ENCODE measurements at regions of chr5 and their contacts with region 1.

Region 1: GRCh38 chr5:56099346-56099745 is 104.6 kb upstream of the IL6ST start:
- DNase-seq: no peak
- ATAC-seq: no peak
- H3K4me3 Mint-ChIP-seq: peak overlapping the region in 7 of 10 donors; percentile 30 to 54 (median 40)
- H3K27ac Mint-ChIP-seq: peak overlapping the region; percentile 67 to 96 (median 90)
- H3K4me1 Mint-ChIP-seq: peaks cover 42 to 86% (median 76%) of the 10 kb centered on the region in 4 donors
- H3K27me3 Mint-ChIP-seq: no peaks in the 10 kb centered on the region

Region 2: GRCh38 chr5:56037531-56038010 is 61.8 kb before region 1 on chr5:
- POLR2A ChIA-PET with region 1: no interaction called
- DNase-seq: no peak
- ATAC-seq: peak in 1 of 2 donors; percentile 27
- H3K4me3 Mint-ChIP-seq: peak overlapping the region in 5 of 10 donors; percentile 10 to 63 (median 46)
- H3K27ac Mint-ChIP-seq: peak overlapping the region in 5 of 10 donors; percentile 18 to 73 (median 61)
- H3K4me1 Mint-ChIP-seq: peaks cover 8 to 24% (median 16%) of the 10 kb centered on the region in 4 donors
- H3K27me3 Mint-ChIP-seq: no peaks in the 10 kb centered on the region

Region 3: DNA sequence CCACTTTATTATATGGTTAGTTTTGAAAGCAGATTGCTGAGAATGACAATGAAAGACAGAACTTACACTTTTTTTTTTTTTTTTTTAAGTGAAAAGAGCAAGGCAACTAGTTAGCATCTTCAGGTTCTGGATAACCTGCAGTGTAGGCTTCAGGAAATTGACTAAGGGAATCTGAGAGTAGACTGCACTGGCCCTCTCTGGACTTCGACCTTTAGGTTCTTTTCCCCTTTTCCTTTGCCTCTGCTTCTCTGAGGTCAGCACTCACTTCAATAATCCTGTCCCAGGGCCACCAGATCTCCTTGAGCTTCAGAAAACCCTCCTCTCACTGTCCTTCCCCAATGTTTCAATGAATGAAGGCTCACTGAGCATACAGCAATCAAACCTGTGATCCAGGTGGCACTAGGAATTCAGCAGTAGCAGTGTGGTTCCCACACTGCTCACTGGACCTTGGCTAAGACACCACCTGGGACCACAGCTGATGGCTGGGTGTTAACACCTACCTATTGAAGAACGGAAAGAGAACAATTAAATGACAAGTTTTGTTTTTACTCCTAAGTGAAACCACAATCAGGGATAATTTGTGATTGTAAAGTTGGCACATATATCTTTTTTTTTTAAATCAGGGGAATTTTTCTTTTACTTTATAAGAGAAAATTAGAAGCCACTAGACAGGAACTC is 18.8 kb before region 1 on chr5:
- POLR2A ChIA-PET with region 1: interaction called, 13 read pairs
- DNase-seq: no peak
- ATAC-seq: peak; percentile 54 to 61
- H3K4me3 Mint-ChIP-seq: peak overlapping the region in 9 of 10 donors; percentile 9 to 81 (median 66)
- H3K27ac Mint-ChIP-seq: peak overlapping the region; percentile 68 to 90 (median 84)
- H3K4me1 Mint-ChIP-seq: peaks cover 35 to 58% (median 50%) of the 10 kb centered on the region in 4 donors
- H3K27me3 Mint-ChIP-seq: no peaks in the 10 kb centered on the region

Region 4: GRCh38 chr5:56148453-56148971 is 49.2 kb after region 1 on chr5:
- POLR2A ChIA-PET with region 1: interaction called, 10 read pairs
- DNase-seq: peak in 7 of 10 donors; percentile 26 to 71 (median 49)
- ATAC-seq: peak; percentile 86
- H3K4me3 Mint-ChIP-seq: peak overlapping the region in 8 of 10 donors; percentile 5 to 70 (median 56)
- H3K27ac Mint-ChIP-seq: peak overlapping the region; percentile 59 to 93 (median 84)
- H3K4me1 Mint-ChIP-seq: peaks cover 31 to 70% (median 54%) of the 10 kb centered on the region in 4 donors
- H3K27me3 Mint-ChIP-seq: no peaks in the 10 kb centered on the region

Region 5: DNA sequence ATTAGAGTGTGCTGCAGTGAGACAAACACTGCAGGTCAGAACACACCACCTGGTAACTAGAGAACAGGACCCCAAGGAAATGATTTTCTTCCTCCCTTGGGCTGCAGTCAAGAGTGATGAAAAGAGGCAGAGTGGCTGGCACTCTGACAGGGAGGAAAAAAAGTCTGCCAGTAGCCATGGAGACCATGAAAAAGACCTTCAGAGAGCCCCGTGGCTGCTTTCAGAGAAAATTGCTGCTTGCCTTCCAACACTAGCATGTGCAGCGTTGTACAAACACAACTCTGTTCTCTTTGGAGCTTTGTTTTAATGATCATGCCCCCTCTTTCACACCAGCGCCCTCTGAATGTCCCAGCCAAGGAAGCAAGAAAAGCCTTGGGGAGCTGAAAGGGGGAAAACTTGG is 65.0 kb after region 1 on chr5:
- POLR2A ChIA-PET with region 1: no interaction called
- DNase-seq: no peak
- ATAC-seq: no peak
- H3K4me3 Mint-ChIP-seq: peak overlapping the region in 1 of 10 donors; percentile 15
- H3K27ac Mint-ChIP-seq: peak overlapping the region in 4 of 10 donors; percentile 9 to 79 (median 66)
- H3K4me1 Mint-ChIP-seq: peaks cover 33 to 67% (median 46%) of the 10 kb centered on the region in 4 donors
- H3K27me3 Mint-ChIP-seq: no peaks in the 10 kb centered on the region